ENCODE measurements at regions of chr19 and their contacts with region 1.

Region 1: GRCh38 chr19:739998-740715 is 10.8 kb upstream of the MISP start:
- DNase-seq: no peak
- H3K4me3 ChIP-seq: no peak overlapping the region
- H3K27ac ChIP-seq: no peak overlapping the region
- H3K4me1 ChIP-seq: no peaks in the 10 kb centered on the region
- H3K27me3 ChIP-seq: no peaks in the 10 kb centered on the region
- CTCF ChIP-seq: no peak

Region 2: GRCh38 chr19:718251-718951 is 21.8 kb before region 1 on chr19:
- CTCF ChIA-PET with region 1: no interaction called
- POLR2A ChIA-PET with region 1: interaction called, 24 read pairs
- intact Hi-C with region 1: no loop called
- DNase-seq: no peak
- H3K4me3 ChIP-seq: no peak overlapping the region
- H3K27ac ChIP-seq: no peak overlapping the region
- H3K4me1 ChIP-seq: no peaks in the 10 kb centered on the region
- H3K27me3 ChIP-seq: no peaks in the 10 kb centered on the region
- CTCF ChIP-seq: no peak

Region 3: DNA sequence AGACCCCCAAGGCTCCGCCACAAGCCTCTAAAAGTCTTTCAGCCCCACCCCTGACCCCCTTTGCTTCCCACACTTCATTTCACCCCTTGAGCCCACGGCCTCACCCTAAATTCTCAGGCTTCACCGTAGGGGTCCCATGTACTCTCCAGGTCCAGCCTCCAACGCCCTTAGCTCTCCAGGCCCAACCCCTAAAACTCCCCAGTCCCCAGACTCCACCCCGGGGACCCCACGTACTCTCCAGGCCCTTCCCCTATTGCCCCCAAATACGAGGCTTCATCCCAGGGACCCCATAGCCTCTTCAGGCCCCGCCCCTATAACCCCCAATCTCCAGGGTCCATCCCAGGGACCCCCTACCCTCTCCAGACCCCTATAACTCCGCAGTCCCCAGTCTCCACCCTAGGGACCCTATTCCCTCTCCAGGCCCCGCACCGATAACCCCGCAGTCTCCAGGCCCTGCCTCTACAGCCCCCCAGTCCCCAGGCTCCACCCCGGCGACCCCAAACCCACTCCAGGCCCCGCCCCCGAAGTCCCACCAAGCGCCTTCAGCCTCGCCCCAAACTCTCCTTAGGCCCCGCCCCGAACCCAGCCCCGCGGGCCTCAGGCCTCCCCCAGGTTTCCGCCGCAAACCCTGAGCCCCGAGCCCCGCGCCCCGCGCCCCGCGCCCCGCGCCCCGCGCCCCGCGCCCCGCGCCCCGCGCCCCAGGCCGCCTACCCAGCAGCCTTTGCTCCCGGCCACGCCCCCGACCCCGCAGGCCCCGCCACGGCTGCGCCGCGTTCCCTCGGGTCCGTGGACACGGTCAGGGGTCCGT is 152.3 kb after region 1 on chr19:
- CTCF ChIA-PET with region 1: no interaction called
- POLR2A ChIA-PET with region 1: no interaction called
- intact Hi-C with region 1: no loop called
- DNase-seq: peak; percentile 52
- H3K4me3 ChIP-seq: peak overlapping the region; percentile 82
- H3K27ac ChIP-seq: peak overlapping the region; percentile 98
- H3K4me1 ChIP-seq: no peaks in the 10 kb centered on the region
- H3K27me3 ChIP-seq: no peaks in the 10 kb centered on the region
- CTCF ChIP-seq: no peak

Measured in A673 (cell line).